ENCODE measurements at regions of chr5 and their contacts with region 1.

Region 1: DNA sequence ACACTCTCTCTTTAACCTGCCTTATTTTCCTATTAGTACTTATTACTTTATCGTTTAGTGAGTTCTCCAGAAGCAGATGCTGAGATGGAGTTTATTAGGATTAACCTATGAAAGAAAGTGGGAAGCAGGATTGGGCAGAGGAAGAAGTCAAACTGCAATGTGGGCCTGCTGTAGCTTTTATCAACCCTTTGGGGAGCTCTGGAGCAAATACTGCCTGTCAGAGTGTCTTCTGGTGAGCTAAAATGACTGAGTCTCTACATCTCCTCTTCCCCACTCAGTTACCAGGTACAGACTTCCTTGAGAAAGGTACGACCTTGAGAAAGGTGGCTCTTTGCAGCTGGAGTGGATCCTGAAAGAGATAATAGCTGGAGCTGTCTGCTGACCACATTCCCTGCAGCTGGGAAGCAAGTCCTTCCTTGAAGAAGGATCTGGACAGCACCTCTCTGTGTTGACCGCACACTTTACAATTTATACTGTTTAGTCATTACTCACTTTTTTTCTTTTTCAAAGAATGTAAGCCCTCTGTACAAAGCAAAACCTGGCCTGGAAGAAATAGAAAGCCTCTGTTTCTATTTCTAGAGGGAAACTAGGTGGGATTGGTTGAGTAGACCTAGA is 148.7 kb downstream of the MACIR start:
- DNase-seq: no peak
- H3K4me3 ChIP-seq: no peak overlapping the region
- CTCF ChIP-seq: no peak
- POLR2A ChIP-seq: no peak

Region 2: DNA sequence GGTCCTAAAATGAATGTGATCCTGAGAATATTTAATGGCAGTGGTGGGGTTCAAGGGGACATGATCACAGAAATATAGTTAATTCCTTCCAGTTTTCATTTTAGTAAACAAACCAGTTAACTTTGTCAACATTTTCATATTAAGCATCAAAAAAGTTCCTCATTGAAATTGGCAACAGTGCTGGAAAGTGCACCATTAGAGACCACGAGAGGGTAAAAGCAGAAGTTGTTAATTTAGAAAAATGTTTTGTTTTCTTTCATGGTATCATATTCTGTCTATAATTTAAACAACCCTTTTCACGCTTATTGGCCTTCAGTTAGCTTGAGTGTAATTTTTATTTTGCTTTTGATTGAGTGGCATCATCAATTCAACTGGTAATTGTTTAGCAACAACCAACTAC is 299.2 kb before region 1 on chr5:
- intact Hi-C with region 1: loop called (anchors 5 kb)
- DNase-seq: no peak
- H3K4me3 ChIP-seq: no peak overlapping the region
- CTCF ChIP-seq: no peak
- POLR2A ChIP-seq: no peak

Region 3: DNA sequence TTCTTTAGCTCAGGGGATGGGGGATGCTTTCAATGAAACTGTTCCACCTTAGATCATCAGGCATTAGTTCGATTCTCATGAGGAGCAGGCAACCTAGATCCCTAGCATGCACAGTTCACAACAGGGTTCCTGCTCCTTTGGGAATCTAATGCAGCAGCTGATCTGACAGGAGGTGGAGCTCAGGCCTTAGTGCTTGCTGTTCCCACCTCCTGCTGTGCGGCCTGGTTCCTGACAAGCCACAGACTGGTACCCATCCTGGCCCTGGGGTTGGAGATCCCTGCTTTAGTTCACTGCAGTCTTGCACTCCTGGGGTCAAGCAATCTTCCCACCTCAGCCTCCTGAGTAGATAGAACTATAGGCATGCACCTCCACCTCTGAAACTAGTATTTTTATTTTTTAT is 1525.1 kb after region 1 on chr5:
- intact Hi-C with region 1: loop called (anchors 5 kb)
- DNase-seq: no peak
- H3K4me3 ChIP-seq: no peak overlapping the region
- CTCF ChIP-seq: no peak
- POLR2A ChIP-seq: no peak

Measured in lower leg skin (tissue), 4 donors.